AG04450 (cell line): ENCODE measurements at regions of chr4 and their contacts with region 1.

Region 1: GRCh38 chr4:39044364-39044955 is 12.3 kb upstream of the TMEM156 start:
- DNase-seq: peak; percentile 82
- H3K4me3 ChIP-seq: peak overlapping the region; percentile 74
- H3K27ac ChIP-seq: peak overlapping the region; percentile 90
- H3K27me3 ChIP-seq: no peaks in the 10 kb centered on the region
- CTCF ChIP-seq: peak; percentile 14; the same call in 1 of the 2 replicates

Region 2: DNA sequence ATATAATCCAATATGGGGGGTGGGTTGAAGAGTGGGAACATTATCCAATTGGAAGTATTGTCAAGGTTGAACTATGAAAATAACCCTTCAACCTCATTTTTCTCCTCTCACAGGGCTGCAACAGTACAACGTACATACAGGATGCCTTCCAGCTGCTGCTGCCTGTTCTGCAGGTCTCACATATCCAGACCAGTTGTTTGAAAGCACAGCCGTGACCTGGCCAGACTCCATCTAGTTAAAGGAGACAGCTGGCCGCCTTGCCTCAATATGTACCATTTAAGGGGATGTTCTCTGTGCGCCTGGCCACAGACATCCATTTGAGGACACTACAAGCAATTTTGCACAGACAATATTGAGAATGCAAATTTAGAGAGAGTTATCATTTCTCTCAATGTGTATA is 101.1 kb before region 1 on chr4:
- CTCF ChIA-PET with region 1: no interaction called
- POLR2A ChIA-PET with region 1: interaction called, 32 read pairs
- DNase-seq: peak; percentile 76
- H3K4me3 ChIP-seq: no peak overlapping the region
- H3K27ac ChIP-seq: no peak overlapping the region
- H3K27me3 ChIP-seq: no peaks in the 10 kb centered on the region
- CTCF ChIP-seq: no peak